ENCODE measurements at regions of chr10 and their contacts with region 1.

Region 1: GRCh38 chr10:119750391-119751230 is 24.8 kb downstream of the INPP5F start:
- DNase-seq: peak in 1 of 2 donors; percentile 76
- ATAC-seq: peak; percentile 94
- H3K4me3 ChIP-seq: no peak overlapping the region
- H3K27ac ChIP-seq: no peak overlapping the region
- H3K4me1 ChIP-seq: no peaks in the 10 kb centered on the region
- H3K27me3 ChIP-seq: no peaks in the 10 kb centered on the region

Region 2: DNA sequence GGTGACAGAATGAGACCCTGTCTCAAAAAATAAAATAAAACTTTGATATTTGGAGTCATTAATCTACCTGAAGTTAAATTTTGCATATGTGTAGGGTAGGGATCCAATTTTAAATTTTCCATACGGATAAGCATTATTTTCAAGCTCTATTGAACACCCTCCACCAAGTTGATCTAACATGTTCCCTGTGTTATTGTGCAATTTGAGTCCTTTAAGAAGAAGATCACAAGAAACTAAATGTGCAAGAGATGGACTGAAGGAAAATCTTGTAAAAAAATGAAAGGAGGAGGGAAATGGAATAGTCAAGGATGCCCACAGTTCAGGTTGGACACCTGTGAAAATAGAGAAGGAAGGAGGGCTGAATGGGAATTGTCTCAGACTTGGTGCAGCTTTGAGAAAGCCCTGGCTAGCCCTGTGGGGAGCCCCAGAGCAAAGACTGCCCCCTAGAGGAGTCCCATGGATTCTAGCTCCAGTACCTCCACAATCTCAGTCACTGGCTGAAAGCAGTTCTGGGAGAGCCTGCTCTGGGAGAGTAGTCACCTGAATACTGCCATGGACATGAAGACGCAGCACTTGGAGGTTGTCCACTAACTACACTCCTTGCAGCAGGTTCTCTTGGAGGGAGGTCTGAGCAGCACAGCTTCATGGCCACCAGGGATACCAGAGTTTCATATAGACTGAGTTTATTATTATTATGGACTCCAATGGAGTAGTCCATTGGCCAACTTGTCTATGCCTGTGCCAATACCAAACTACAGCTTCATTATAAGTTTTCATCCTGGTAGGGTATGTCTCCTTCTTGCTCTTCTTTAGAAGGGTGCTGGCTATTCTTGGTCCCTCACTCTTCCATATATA is 148.1 kb before region 1 on chr10:
- intact Hi-C with region 1: no loop called
- DNase-seq: no peak
- ATAC-seq: no peak
- H3K4me3 ChIP-seq: no peak overlapping the region
- H3K27ac ChIP-seq: no peak overlapping the region
- H3K4me1 ChIP-seq: no peaks in the 10 kb centered on the region
- H3K27me3 ChIP-seq: no peaks in the 10 kb centered on the region

Region 3: DNA sequence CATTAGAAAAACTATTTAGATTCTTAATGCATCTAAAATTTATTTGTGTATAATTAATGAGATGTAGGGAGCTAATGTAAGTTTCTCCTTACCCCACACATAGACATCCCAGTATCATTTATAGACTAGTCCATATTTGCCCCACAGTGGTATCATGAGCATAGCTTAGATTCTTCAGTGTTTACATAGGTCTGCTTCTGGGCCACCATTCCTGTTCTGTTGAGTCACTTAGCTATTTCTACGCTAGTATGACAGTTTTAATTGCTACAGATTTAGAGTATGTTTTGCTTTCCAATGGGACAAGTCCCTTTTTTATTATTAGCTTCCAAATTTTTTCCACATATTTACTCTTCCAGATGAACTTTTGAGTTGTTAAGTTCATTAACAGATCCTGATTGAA is 52.7 kb after region 1 on chr10:
- intact Hi-C with region 1: no loop called
- DNase-seq: no peak
- ATAC-seq: no peak
- H3K4me3 ChIP-seq: no peak overlapping the region
- H3K27ac ChIP-seq: no peak overlapping the region
- H3K4me1 ChIP-seq: peaks cover 0 to 1% of the 10 kb centered on the region in 2 donors
- H3K27me3 ChIP-seq: no peaks in the 10 kb centered on the region

Region 4: DNA sequence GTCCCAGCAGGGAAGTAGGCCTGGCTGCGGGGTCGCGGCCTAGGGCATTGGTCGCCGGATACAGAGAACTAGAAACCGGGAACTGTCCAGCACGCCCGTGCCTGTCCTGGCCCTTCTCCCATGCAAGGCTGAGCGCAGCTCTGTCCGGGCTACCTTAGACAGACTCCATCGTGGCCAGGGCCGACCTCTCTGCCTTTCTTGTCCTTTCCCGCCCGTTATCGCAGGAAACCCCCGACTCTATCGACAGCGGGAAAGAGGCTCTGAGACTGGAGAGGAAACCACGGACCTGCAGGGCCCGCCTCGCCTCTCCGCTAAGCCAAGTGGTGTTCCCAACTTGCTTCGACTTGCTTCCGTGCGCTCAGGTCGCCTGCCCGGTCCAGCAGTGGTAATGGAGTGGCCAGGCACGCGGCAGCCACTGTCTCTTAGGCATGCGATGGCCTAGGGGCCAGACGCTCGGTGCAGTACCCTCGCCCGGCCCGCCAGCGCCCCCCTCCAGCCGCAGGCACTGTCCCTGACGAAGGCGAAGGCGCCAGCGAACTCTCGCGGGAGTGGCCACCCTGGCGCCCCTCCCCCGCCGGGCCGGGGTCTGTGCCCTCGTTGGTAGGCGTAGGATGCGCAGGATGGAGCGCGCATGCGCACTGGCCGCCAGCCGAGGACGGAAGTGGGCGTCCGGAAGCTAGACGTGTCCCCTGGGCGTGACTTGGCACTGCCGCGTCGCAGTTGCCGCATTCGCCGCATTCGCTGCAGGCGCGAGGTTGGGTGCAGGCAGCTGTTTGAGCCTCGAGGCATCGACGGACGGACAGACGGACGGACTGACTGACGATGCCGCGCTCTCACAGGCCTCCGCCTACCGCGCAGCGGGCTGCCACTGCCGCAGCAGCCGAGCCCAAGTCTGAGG is 67.6 kb after region 1 on chr10:
- intact Hi-C with region 1: loop called in 1 of 2 experiments (anchors 5 kb)
- DNase-seq: peak; percentile 84 to 91
- ATAC-seq: peak; percentile 78
- H3K4me3 ChIP-seq: no peak overlapping the region
- H3K27ac ChIP-seq: no peak overlapping the region
- H3K4me1 ChIP-seq: no peaks in the 10 kb centered on the region
- H3K27me3 ChIP-seq: no peaks in the 10 kb centered on the region